B cell (primary cell): ENCODE measurements at regions of chr22 and their contacts with region 1.

Region 1: DNA sequence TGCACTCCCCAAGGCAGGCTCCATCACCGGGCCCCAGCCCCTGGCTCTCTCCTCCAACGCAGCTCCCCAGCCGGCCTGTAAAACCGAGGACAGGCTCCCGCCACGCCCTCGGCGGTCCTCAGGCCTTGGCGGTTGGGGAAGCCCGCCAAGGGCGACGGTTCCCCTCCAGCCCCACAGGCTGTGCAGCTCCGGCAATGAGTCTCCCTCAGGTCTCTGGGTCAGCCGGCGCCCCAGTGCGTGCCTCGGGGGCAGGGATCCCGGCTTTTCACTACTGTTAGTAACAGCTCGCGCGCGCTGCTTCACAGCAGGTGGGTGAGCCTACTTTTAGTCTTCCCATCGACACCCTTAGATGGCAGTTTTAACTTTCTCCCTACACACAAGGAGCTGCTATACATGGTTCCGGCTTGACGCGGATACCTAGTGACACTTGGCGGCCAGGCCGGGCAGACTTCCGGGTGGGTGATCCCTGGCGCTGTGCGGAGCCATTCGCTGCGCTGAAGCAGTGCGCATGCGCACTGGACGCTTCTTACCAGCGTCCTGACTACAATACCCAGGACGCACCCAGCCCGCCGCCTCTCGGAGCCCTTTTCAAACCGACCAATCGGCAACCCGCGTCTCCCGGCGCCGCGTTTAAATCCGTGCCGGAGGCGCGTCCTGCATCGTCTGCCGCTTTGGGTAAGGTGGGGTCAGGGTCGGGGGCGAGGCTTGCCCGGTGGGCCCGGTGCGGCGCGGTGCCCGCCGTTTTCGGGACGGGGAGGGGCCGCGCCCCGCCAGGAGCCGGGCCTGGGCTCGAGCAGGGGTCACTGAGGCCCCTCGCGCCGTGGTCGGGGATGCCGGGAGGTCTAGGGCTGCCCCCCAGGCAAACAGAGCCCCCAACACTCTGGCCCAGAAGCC is at the start of gene GTSE1:
- DNase-seq: peak; percentile 99
- ATAC-seq: peak; percentile 96
- H3K4me3 ChIP-seq: peak within 1 kb of the TSS; percentile 11 to 76 (median 63)
- H3K4me3 Mint-ChIP-seq: peak within 1 kb of the TSS; percentile 85
- H3K27ac ChIP-seq: peak within 1 kb of the TSS; percentile 88 to 95
- H3K27ac Mint-ChIP-seq: peak within 1 kb of the TSS; percentile 99
- H3K4me1 ChIP-seq: peaks cover 29 to 39% of the 10 kb centered on the region in 2 donors
- H3K4me1 Mint-ChIP-seq: peaks cover 41% of the 10 kb centered on the region
- H3K27me3 ChIP-seq: peaks cover 0 to 5% (median 2%) of the 10 kb centered on the region in 4 experiments
- H3K27me3 Mint-ChIP-seq: no peaks in the 10 kb centered on the region
- CTCF ChIP-seq: peak; percentile 19
- total RNA-seq, gene GTSE1: 0.17 and 0.27 TPM in 2 replicates

Region 2: GRCh38 chr22:46025225-46025972 is 271.1 kb before region 1 on chr22:
- CTCF ChIA-PET with region 1: no interaction called
- POLR2A ChIA-PET with region 1: no interaction called
- intact Hi-C with region 1: no loop called
- DNase-seq: no peak
- ATAC-seq: no peak
- H3K4me3 ChIP-seq: no peak overlapping the region
- H3K4me3 Mint-ChIP-seq: no peak overlapping the region
- H3K27ac ChIP-seq: no peak overlapping the region
- H3K27ac Mint-ChIP-seq: no peak overlapping the region
- H3K4me1 ChIP-seq: no peaks in the 10 kb centered on the region
- H3K4me1 Mint-ChIP-seq: peaks cover 7% of the 10 kb centered on the region
- H3K27me3 ChIP-seq: peaks cover 0 to 55% (median 20%) of the 10 kb centered on the region in 4 experiments
- H3K27me3 Mint-ChIP-seq: peaks cover 39% of the 10 kb centered on the region
- CTCF ChIP-seq: no peak

Region 3: GRCh38 chr22:46035742-46036557 is 260.6 kb before region 1 on chr22:
- CTCF ChIA-PET with region 1: interaction called, 3 read pairs
- POLR2A ChIA-PET with region 1: no interaction called
- intact Hi-C with region 1: loop called (anchors 1 kb)
- DNase-seq: peak; percentile 100
- ATAC-seq: peak; percentile 92
- H3K4me3 ChIP-seq: peak overlapping the region; percentile 47 to 94 (median 87)
- H3K4me3 Mint-ChIP-seq: peak overlapping the region; percentile 87
- H3K27ac ChIP-seq: peak overlapping the region; percentile 90
- H3K27ac Mint-ChIP-seq: peak overlapping the region; percentile 95
- H3K4me1 ChIP-seq: peaks cover 15 to 16% of the 10 kb centered on the region in 2 donors
- H3K4me1 Mint-ChIP-seq: peaks cover 18% of the 10 kb centered on the region
- H3K27me3 ChIP-seq: no peaks in the 10 kb centered on the region
- H3K27me3 Mint-ChIP-seq: no peaks in the 10 kb centered on the region
- CTCF ChIP-seq: no peak

Region 4: GRCh38 chr22:46150034-46150654 is 146.4 kb before region 1 on chr22 and contains the start of gene PPARA:
- CTCF ChIA-PET with region 1: interaction called, 4 read pairs
- POLR2A ChIA-PET with region 1: interaction called, 5 read pairs
- intact Hi-C with region 1: loop called (anchors 1 kb)
- DNase-seq: peak; percentile 89
- ATAC-seq: peak; percentile 84
- H3K4me3 ChIP-seq: peak within 1 kb of the TSS; percentile 53 to 88 (median 72)
- H3K4me3 Mint-ChIP-seq: peak within 1 kb of the TSS; percentile 88
- H3K27ac ChIP-seq: peak within 1 kb of the TSS; percentile 60 to 69
- H3K27ac Mint-ChIP-seq: peak within 1 kb of the TSS; percentile 84
- H3K4me1 ChIP-seq: peaks cover 12 to 23% of the 10 kb centered on the region in 2 donors
- H3K4me1 Mint-ChIP-seq: peaks cover 21% of the 10 kb centered on the region
- H3K27me3 ChIP-seq: no peaks in the 10 kb centered on the region
- H3K27me3 Mint-ChIP-seq: no peaks in the 10 kb centered on the region
- CTCF ChIP-seq: no peak
- total RNA-seq, gene PPARA: 28.3 and 29.8 TPM in 2 replicates

Region 5: GRCh38 chr22:46171940-46172339 is 124.6 kb before region 1 on chr22:
- CTCF ChIA-PET with region 1: no interaction called
- POLR2A ChIA-PET with region 1: no interaction called
- intact Hi-C with region 1: no loop called
- DNase-seq: no peak
- ATAC-seq: no peak
- H3K4me3 ChIP-seq: no peak overlapping the region
- H3K4me3 Mint-ChIP-seq: no peak overlapping the region
- H3K27ac ChIP-seq: no peak overlapping the region
- H3K27ac Mint-ChIP-seq: no peak overlapping the region
- H3K4me1 ChIP-seq: no peaks in the 10 kb centered on the region
- H3K4me1 Mint-ChIP-seq: peaks cover 7% of the 10 kb centered on the region
- H3K27me3 ChIP-seq: no peaks in the 10 kb centered on the region
- H3K27me3 Mint-ChIP-seq: no peaks in the 10 kb centered on the region
- CTCF ChIP-seq: no peak

Region 6: DNA sequence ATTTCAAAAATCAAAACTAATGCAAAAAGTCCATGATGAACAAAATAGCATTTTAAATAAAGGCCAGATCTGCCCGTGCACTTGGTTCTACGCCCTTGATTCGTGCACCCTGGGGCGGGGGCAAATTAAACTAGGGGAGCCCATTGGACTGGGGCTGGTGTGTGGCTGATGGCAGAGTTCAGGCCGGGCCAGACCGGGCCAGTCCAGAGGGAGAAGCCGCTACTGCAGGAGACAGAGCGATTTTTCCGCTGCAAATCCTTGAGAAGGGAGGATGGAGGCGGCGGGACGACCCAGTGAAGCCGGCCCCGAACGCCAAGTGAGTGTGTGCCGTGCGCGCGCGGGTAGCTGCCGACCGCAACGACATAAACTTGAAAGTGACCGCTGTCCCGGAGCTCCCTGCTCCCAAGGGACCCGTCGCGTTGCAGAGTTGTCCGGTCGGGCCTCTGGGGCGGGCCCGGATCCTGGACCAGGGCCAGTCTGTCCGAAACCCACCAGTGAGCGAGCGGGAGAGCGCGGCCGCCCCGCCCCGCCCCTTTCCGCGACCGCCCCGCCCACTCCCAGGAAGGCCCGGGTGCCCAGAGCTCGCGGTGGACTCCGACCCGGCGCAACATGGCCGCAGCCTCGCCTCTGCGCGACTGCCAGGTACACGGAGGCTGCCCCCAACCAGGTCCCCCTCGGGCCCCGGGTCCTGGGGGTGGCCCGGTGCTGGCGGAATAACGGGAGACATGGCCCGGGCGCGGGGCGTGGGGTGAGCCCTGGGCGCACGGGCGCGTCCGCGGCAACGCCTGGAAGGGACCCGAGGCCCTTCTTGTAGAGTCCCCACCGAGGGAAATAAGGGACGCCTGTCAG is 28.8 kb before region 1 on chr22 and contains the start of gene TTC38:
- CTCF ChIA-PET with region 1: interaction called, 3 read pairs
- POLR2A ChIA-PET with region 1: interaction called, 3 read pairs
- intact Hi-C with region 1: loop called (anchors 1 kb)
- DNase-seq: peak; percentile 62
- ATAC-seq: peak; percentile 95
- H3K4me3 ChIP-seq: peak within 1 kb of the TSS in 4 of 5 experiments; percentile 68 to 80 (median 72)
- H3K4me3 Mint-ChIP-seq: peak within 1 kb of the TSS; percentile 85
- H3K27ac ChIP-seq: peak within 1 kb of the TSS in 1 of 2 donors; percentile 49
- H3K27ac Mint-ChIP-seq: peak within 1 kb of the TSS; percentile 46
- H3K4me1 ChIP-seq: peaks cover 4 to 8% of the 10 kb centered on the region in 2 donors
- H3K4me1 Mint-ChIP-seq: peaks cover 16% of the 10 kb centered on the region
- H3K27me3 ChIP-seq: peaks cover 0 to 13% (median 8%) of the 10 kb centered on the region in 4 experiments
- H3K27me3 Mint-ChIP-seq: peaks cover 26% of the 10 kb centered on the region
- CTCF ChIP-seq: no peak
- total RNA-seq, gene TTC38: 13.3 and 14.9 TPM in 2 replicates